ENCODE measurements at regions of chr12 and their contacts with region 1.

Region 1: GRCh38 chr12:62581288-62582064 is 114.8 kb downstream of the MON2 start:
- DNase-seq: peak; percentile 28
- ATAC-seq: peak; percentile 89 to 91

Region 2: DNA sequence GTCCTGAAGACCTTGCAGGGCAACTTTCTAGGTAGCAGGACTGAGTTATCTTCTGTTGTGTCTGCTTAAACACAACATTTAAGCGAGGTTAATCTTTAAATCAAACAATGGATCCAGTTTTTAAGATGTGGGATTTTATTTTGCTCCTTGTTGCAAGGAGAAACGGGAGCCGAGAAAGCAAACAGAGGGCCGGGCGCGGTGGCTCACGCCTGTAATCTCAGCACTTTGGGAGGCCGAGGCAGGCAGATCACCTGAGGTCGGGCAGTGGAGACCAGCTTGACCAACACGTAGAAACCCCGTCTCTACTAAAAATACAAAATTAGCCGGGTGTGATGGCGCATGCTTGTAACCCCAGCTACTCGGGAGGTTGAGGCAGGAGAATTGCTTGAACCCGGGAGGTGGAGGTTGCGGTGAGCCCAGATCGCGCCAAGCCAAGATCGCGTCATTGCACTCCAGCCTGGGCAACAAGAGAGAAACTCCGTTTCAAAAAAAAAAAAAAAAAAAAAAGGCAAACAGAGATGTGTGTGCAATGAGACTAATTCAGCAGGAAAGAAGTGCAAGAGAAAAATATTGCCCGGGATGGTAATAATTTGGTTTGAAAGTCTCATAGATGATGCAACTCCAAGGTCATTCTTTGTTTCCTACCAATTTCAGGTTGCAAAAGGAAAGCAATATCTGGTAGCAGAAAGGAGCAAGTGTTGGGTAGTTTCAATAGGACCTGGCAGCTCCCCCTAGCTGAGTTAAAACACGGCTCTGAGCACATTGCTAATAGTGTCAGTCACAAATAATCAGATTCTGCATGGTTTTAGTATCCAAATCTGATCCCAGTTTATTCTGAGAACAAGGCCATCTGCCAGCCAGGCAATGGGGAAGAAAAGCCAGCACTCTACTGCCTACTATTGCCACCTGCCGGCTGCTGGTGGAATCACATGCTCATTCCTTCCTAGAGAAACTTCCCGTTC is 212.1 kb after region 1 on chr12:
- intact Hi-C with region 1: loop called (anchors 2 kb)
- DNase-seq: peak; percentile 85
- ATAC-seq: peak; percentile 78 to 80

Region 3: DNA sequence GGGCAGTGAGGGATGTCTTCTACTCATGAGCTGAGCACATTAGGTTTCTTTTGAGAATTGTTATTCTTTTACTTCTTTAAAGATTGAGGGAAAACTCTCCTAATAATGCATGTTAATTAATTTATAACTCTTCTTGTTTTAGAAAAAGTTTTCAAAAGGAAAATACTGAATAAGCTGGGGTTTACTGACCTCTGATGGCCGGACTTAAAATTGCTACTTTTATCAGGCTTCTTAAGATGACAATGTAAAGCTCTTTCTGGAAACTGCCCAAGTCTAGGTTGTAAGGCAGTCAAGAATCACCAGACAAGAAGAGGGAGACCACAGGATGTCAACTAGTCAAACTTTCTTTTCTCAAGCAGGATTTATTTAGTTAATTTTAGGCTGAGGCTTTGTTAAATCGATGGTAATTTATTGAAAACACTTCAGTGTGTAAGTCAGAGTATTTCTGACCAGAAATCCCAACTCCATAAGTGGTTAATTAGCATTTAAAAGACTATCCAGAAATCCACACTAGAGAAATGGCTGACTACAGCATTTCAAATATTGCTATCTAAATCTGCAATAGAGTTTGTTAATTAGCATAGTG is 487.5 kb after region 1 on chr12:
- intact Hi-C with region 1: loop called in 1 of 2 experiments (anchors 5 kb)
- DNase-seq: no peak
- ATAC-seq: no peak

Measured in left cardiac atrium (tissue), 4 donors.